Panc1 (cell line): ENCODE measurements at regions of chr11 and their contacts with region 1.

Region 1: DNA sequence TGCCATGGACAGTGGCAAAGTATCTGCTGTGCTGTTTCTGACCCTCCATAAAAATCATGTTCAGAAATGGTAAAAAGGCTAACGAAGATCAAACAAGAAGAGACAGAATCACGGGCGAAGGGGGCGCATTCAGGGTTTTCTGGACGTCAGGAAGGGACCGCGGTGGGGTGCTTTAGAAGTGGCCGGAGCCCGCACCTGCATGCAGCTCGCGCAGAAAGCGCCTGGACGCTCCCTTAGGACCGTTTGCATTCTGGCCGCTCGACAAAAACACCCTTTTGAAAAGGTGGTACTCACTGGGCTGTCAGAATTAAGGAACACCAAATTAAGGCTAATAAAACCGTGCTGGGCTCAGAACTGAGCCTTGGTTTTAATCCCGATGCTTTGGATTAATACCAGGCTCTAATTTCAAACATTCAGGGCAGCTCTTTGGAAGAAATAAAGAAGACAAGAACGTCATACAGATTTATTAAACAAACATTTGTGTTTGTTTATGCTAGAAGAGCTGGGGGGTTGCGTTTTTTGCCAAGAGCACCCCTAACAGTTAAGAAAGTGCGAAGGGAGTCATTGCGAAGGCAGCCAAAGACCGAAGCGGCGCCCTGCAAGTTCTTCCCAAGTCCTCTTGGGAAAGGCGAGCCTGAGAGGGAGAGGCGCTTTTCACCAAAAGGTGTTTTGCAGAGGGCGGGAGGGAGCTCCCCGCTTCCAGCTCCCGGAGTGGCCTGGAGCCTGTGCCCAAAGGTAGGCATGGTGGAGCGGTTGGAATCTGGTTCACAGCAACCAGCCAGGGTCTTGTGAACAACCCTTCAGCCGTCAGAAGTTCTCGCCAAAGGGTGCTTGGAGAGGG is 47.7 kb upstream of the DBX1 start:
- DNase-seq: no peak
- ATAC-seq: no peak
- H3K4me3 ChIP-seq: no peak overlapping the region
- H3K27ac ChIP-seq: no peak overlapping the region
- H3K4me1 ChIP-seq: no peaks in the 10 kb centered on the region
- H3K27me3 ChIP-seq: peaks cover 11% of the 10 kb centered on the region
- CTCF ChIP-seq: no peak

Region 2: DNA sequence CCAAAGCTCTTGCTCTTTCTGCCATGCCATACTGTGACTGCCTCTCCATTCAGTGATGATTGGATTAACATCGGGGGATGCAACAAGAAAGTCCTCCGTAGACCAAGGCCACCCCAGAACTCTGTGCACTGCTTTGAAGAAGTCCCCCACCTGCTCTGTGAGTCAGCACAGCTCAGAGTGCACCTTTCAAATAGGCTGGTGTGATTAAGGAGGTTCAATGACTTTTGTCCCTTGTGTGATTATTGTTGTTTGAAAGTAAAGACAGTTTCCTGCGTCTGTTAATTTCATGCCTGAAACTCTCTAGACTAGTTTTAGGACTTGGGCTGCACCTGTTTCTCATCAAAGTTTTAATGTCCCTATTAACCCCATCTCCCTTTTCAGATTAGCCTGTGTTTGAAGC is 14.7 kb before region 1 on chr11:
- CTCF ChIA-PET with region 1: no interaction called
- POLR2A ChIA-PET with region 1: interaction called, 12 read pairs
- in situ Hi-C with region 1: no loop called
- intact Hi-C with region 1: no loop called
- DNase-seq: no peak
- ATAC-seq: no peak
- H3K4me3 ChIP-seq: no peak overlapping the region
- H3K27ac ChIP-seq: no peak overlapping the region
- H3K4me1 ChIP-seq: no peaks in the 10 kb centered on the region
- H3K27me3 ChIP-seq: no peaks in the 10 kb centered on the region; the same call in none of the 2 replicates
- CTCF ChIP-seq: no peak

Region 3: DNA sequence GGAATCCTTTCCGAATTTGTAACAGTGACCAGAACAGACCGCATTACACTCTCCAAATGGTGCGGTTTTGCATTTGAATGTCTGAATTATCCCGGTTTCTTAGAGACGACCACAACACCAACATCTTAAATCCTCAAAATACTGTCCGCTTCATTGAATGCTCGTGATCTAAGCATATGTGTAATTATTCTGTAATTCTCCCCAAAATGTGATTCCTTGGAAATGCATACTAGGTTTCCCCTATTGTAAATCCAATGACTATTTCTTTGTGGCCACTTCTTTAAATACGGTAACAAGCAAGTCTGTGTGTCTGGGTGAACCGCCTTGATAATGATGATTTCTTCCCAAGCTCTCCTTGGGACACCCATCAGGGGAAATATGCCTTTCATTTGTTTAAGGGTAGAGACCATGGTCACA is 39.6 kb after region 1 on chr11:
- CTCF ChIA-PET with region 1: interaction called, 11 read pairs
- POLR2A ChIA-PET with region 1: no interaction called
- in situ Hi-C with region 1: no loop called
- intact Hi-C with region 1: no loop called
- DNase-seq: no peak
- ATAC-seq: no peak
- H3K4me3 ChIP-seq: no peak overlapping the region
- H3K27ac ChIP-seq: no peak overlapping the region
- H3K4me1 ChIP-seq: no peaks in the 10 kb centered on the region
- H3K27me3 ChIP-seq: peaks cover 27% of the 10 kb centered on the region
- CTCF ChIP-seq: no peak

Region 4: DNA sequence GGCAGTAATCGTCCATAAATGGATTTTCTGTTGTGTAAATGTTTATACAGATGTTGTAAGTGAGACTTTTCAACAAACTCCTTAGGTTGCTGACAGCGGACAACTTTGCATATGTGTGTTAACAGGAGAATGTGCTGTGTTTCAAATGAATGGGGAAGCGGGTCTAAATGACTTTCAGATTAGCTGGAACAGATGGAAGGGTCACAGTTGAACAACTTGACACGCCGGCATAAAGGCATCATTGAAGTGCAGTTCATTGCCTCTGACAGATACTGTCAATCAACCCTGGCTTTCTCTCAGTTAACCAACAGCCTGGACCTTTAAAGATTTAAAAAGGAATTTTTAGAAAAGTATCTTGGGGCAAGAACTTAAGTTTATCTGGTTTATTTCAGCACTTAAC is 50.5 kb after region 1 on chr11:
- CTCF ChIA-PET with region 1: no interaction called
- POLR2A ChIA-PET with region 1: no interaction called
- in situ Hi-C with region 1: no loop called
- intact Hi-C with region 1: no loop called
- DNase-seq: no peak
- ATAC-seq: no peak
- H3K4me3 ChIP-seq: no peak overlapping the region
- H3K27ac ChIP-seq: no peak overlapping the region
- H3K4me1 ChIP-seq: no peaks in the 10 kb centered on the region; the same call in 1 of the 2 replicates
- H3K27me3 ChIP-seq: peaks cover 25% of the 10 kb centered on the region
- CTCF ChIP-seq: no peak